A673 (cell line): ENCODE measurements at regions of chr6 and their contacts with region 1.

Region 1: DNA sequence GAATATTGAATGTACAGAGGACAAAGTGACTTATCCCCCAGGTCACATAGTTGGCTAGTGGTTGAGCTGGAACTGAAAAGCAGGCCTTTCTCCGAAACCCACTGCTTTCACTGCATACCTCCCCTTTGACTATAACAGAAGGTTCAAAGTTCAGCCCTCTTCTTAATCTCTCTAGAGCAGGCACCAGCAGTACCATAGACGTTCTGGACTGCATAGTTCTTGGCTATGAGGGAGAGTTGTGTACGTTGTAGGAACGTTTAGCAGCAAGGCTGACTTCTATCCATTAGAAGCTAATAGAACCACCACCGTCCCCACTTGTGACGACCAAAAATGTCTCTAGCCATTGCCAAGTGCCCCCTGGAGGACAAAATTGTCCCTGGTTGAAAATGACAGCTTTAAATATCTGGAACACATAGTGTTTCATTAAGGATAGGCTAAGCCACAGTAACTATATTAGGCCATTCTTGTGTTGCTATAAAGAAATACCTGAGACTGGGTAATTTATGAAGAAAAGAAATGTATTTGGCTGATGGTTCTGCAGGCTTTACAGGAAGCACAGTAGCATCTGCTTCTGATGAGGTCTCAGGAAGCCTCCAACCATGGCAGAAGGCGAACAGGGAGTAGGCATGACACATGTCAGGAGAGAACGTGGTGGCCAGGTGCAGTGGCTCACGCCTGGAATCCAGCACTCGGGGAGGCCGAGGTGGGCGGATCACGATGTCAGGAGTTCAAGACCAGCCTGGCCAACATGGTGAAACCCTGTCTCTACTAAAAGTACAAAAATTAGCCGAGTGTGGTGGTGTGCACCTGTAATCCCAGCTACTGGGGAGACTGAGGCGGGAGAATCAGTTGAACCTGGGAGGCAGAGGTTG is 123.6 kb upstream of the MTHFD1L start:
- DNase-seq: peak; percentile 65
- H3K4me3 ChIP-seq: no peak overlapping the region
- H3K27ac ChIP-seq: no peak overlapping the region
- H3K4me1 ChIP-seq: peaks cover 15% of the 10 kb centered on the region
- H3K27me3 ChIP-seq: no peaks in the 10 kb centered on the region
- CTCF ChIP-seq: peak; percentile 72

Region 2: DNA sequence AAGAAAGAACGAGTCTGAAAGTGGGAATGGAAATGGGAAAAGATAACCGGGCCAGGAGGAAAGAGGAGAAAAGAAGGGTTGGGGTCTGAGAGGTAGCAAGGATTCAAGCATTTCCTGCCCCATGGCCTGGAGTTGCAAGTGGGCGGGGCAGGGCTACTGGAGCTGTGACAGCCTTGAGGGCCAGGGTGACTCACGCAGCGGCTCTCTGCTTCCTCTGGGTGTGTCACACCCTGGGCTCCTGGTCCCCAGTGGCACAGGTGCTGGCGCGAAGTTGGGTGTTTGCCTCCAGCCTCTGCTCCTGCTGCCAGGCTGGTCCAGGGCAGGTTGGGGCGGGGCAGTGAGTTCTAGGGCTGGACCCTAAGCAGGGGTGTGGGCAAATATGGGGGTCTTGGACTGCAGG is 669.7 kb before region 1 on chr6:
- CTCF ChIA-PET with region 1: no interaction called
- POLR2A ChIA-PET with region 1: no interaction called
- intact Hi-C with region 1: loop called (anchors 10 kb)
- DNase-seq: no peak
- H3K4me3 ChIP-seq: no peak overlapping the region
- H3K27ac ChIP-seq: no peak overlapping the region
- H3K4me1 ChIP-seq: no peaks in the 10 kb centered on the region
- H3K27me3 ChIP-seq: no peaks in the 10 kb centered on the region
- CTCF ChIP-seq: no peak

Region 3: DNA sequence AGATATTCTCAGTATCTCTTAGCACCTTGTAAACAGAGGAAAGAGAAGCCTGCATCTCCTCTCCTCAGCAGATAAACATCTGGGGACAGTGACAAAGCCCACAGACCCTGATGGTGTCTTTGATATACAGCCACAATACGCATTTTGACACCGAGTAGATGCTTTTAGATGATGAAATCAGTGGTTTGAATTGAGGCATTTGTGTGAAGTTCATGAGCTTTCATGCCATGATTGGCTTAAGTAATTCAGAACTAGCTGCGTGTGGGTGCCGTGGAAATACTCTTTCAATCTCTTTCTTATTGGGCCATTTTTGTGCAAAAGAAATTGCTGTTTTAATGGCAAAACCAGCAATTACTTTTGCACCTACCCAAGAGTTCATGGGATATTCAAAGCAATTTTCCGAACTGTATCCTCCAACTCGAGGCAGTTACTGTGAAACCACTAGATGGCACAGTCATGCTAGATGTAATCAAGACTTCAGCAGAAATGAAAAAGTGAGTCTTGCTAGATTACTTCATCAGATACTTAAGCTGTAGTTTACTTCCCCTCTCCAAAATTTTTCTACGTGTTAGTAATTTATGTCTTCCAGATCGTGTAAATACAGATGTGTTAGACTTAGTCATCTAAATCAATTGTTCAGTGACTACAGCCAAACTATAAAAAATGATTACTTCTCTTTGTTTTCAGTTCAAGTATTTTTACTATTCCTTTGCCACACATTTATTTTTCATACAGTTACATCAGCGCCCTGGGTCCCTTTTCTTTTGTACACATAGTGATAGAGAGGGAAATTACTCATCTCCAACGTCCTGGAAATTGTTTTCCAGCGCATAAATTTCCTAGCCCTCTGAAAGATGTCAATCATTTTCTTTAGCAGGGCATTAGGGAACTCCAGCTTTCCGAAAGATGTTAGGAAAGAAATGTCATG is 323.7 kb before region 1 on chr6:
- CTCF ChIA-PET with region 1: interaction called, 8 read pairs
- POLR2A ChIA-PET with region 1: no interaction called
- intact Hi-C with region 1: loop called (anchors 2 kb)
- DNase-seq: peak; percentile 91
- H3K4me3 ChIP-seq: peak overlapping the region; percentile 39
- H3K27ac ChIP-seq: peak overlapping the region; percentile 92
- H3K4me1 ChIP-seq: peaks cover 27% of the 10 kb centered on the region
- H3K27me3 ChIP-seq: no peaks in the 10 kb centered on the region
- CTCF ChIP-seq: peak; percentile 88

Region 4: GRCh38 chr6:150600301-150601017 is 141.4 kb before region 1 on chr6:
- CTCF ChIA-PET with region 1: no interaction called
- POLR2A ChIA-PET with region 1: no interaction called
- intact Hi-C with region 1: loop called (anchors 10 kb)
- DNase-seq: peak; percentile 80
- H3K4me3 ChIP-seq: peak overlapping the region; percentile 63
- H3K27ac ChIP-seq: no peak overlapping the region
- H3K4me1 ChIP-seq: no peaks in the 10 kb centered on the region
- H3K27me3 ChIP-seq: peaks cover 11% of the 10 kb centered on the region
- CTCF ChIP-seq: peak; percentile 53

Region 5: DNA sequence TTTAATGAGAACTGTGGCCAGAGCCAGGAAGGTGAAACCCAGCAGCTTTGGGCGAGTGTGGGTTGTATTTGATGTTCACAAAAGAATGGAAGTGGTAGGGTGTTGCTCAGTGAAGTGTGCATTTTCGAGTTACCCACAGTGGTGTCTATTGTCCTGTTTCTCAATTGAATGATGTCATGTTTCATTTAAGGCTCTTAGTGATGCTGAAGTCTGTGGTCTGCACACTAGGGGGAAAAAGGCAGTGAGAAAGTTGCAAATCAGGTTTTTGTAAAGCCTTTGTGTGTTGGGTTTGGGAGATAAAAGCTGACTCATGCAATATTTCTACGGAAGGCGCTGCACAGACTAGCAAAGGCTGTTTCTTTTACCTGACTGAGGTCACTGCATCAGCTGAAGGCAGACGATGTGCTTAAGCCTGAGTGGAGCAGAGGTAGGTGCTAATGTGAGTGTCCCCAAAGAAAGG is 21.1 kb before region 1 on chr6:
- CTCF ChIA-PET with region 1: interaction called, 15 read pairs
- POLR2A ChIA-PET with region 1: no interaction called
- intact Hi-C with region 1: no loop called
- DNase-seq: peak; percentile 83
- H3K4me3 ChIP-seq: peak overlapping the region; percentile 11
- H3K27ac ChIP-seq: peak overlapping the region; percentile 15
- H3K4me1 ChIP-seq: peaks cover 26% of the 10 kb centered on the region
- H3K27me3 ChIP-seq: no peaks in the 10 kb centered on the region
- CTCF ChIP-seq: 0 out of 2 replicates have a peak, but pooled peaks have one; percentile 15

Region 6: DNA sequence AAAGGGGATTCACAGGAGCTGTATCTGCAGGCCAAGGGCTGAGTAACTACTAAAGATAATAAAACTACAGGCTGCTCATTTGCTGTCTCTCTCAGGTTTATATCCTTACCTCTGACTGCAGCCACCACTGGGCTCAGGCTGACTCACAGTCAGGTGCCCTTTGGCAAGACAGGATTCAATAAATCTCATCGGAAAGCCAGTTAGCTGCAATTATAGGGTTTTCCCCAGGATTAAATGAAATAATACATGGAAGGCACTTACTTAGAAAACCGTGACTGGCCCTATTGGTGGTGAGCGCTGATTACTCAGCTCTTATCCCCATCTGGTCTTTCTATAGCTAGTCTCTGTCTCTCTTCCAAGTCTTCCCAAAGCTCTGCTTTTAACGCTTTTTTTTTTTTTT is 683.7 kb after region 1 on chr6:
- CTCF ChIA-PET with region 1: no interaction called
- POLR2A ChIA-PET with region 1: no interaction called
- intact Hi-C with region 1: no loop called
- DNase-seq: no peak
- H3K4me3 ChIP-seq: no peak overlapping the region
- H3K27ac ChIP-seq: no peak overlapping the region
- H3K4me1 ChIP-seq: peaks cover 4% of the 10 kb centered on the region
- H3K27me3 ChIP-seq: no peaks in the 10 kb centered on the region
- CTCF ChIP-seq: no peak